Heart right ventricle (tissue), 16 donors: ENCODE measurements at regions of chr3 and their contacts with region 1.

Region 1: DNA sequence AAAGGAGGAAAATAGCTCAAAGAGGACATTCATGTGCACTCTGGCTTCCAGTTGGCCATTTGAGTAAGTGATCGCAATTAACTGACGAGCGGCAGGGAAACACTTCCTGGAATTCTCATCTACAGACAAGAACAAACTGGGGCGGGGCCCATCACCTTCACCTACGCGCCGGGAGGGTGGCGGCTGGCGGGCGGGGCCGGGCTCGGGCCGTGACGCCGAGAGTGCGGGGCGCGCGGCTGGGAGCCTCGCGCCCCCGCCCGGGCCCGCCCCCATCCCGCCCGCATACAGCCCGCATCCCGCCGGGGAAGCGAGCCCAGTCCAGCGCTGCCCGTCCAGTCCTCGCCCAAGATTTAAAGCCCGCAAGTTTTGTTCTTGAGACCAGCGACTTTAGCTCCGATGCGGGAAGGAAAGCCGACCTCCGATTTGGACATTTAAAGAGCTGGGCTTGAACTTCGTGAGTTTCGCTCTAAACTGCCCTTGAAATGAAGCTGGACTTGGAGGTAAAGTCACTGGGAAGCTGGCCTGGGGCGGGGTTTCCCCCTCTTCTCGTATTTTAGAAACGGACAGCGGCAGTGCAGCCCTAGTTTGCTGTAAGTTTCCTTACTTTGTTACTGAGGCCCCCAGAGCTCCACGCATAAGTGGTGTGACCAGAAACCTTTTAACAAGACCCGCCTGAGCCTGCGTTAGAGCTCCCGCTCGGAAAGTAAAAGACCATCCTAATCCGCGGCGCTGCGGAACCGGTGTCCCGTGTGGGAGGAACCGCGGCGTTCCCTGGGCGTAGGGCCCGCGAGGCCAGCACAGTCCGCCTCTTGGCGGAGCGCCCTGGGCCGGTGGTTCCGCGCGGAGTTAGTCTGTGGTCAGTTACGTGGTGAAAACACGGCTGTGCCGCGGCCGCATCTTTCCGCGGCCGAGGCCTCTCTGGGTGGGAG is at the start of gene B3GNT5:
- DNase-seq: peak; percentile 80 to 81
- ATAC-seq: peak; percentile 83 to 93 (median 90)
- H3K4me3 ChIP-seq: peak within 1 kb of the TSS; percentile 65 to 92 (median 80)
- H3K27ac ChIP-seq: peak within 1 kb of the TSS; percentile 83 to 97 (median 90)
- H3K4me1 ChIP-seq: peaks cover 0 to 22% (median 0%) of the 10 kb centered on the region in 9 donors
- H3K27me3 ChIP-seq: peaks cover 0 to 6% (median 0%) of the 10 kb centered on the region in 7 donors
- CTCF ChIP-seq: no peak
- total RNA-seq, gene B3GNT5: 2.0 to 9.0 (median 5.8) TPM

Region 2: DNA sequence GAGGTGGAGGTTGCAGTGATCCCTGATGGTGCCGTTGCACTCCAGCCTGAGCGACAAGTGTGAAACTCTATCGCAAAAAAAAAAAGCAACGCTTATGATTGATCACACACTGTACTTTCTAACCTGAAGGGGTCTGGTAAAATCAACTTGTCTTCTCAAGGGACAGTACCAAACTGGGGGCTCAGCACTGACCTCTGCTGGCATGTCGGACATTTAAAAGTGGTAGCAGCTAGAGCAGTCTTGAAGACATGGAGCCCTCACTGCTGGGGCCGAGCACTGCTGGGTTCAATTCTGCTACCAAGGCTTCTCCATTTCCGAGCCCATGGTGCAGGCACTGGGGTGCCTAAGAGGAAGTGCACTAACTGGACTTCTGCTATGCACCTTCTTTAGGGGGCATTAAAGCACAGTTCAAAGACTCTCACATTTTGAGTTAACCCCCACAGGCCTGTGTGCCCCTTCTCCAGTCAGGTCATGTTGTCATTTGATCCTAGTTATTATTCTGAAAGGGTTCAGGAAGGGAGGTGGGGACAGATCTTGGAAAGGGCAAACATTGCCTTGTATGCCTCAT is 64.3 kb before region 1 on chr3:
- intact Hi-C with region 1: loop called in 2 of 10 experiments (anchors 5 to 10 kb)
- DNase-seq: peak in 1 of 2 donors; percentile 44
- ATAC-seq: peak in 5 of 8 donors; percentile 27 to 59 (median 41)
- H3K4me3 ChIP-seq: no peak overlapping the region
- H3K27ac ChIP-seq: no peak overlapping the region
- H3K4me1 ChIP-seq: peaks cover 0 to 20% (median 0%) of the 10 kb centered on the region in 9 donors
- H3K27me3 ChIP-seq: peaks cover 0 to 4% (median 0%) of the 10 kb centered on the region in 7 donors
- CTCF ChIP-seq: peak in 7 of 9 donors; percentile 29 to 60 (median 43)

Region 3: DNA sequence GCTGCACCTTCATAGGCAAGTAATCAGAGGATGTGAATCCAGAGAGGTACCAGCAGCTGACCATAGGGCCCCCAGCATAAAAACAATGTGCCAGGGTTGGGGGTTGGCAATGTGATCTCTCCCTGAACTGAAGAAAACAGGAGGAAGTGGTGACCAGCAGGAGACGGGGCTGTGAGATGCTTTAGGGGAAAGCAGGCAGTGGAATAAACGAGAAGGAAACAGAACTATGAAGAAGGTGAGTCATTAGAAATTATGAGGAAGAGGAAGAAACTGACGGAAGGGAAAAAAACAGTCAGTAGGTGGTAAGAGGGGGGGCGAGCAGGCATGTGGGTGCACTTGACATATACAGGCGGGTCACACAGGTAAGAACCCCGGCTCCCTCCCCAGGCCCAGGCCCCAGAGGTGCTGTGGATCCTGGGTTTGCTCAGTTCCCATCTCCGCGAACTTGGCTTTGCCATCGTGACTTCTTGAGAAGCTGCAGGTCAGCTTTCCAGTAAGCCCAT is 42.3 kb before region 1 on chr3:
- intact Hi-C with region 1: loop called in 4 of 10 experiments (anchors 5 kb)
- DNase-seq: peak in 1 of 2 donors; percentile 19
- ATAC-seq: peak; percentile 25 to 59 (median 53)
- H3K4me3 ChIP-seq: peak overlapping the region in 2 of 10 donors; percentile 15 to 27
- H3K27ac ChIP-seq: peak overlapping the region in 9 of 10 donors; percentile 42 to 89 (median 71)
- H3K4me1 ChIP-seq: peaks cover 0 to 47% (median 21%) of the 10 kb centered on the region in 9 donors
- H3K27me3 ChIP-seq: no peaks in the 10 kb centered on the region
- CTCF ChIP-seq: no peak

Region 4: DNA sequence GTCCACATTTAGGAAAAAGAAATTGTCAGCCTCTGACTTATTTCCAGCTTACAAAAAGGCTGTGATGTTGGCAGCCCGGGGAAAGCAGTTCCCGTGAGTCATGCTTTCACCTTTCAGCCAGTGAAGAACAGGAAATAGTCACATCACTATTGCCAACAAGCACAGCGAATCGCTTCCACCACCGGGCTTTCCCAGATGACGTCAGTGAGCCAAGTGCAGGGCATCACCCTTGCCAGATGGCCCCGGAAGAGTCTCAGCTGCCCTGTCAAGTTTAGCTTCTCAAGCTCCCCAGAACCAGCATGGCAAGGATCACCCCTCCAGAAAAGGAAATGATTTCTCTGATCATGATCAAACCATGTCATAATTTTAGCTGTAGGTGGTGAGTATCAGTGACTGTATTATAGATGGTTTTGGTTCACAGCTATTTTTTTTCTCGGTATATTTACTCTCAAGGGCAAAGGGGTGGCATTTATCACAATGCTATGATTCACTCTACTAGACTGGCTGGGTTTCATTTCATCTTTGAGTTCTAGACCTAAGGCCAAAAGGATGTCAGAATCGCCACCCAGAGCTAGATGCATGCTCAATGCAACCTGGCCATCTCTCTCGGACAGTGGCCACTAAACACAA is 32.7 kb after region 1 on chr3:
- intact Hi-C with region 1: loop called in 1 of 10 experiments (anchors 5 kb)
- DNase-seq: peak; percentile 67 to 88
- ATAC-seq: peak; percentile 84 to 98 (median 94)
- H3K4me3 ChIP-seq: peak overlapping the region in 2 of 10 donors; percentile 2 to 9
- H3K27ac ChIP-seq: peak overlapping the region; percentile 42 to 83 (median 69)
- H3K4me1 ChIP-seq: peaks cover 0 to 33% (median 17%) of the 10 kb centered on the region in 9 donors
- H3K27me3 ChIP-seq: no peaks in the 10 kb centered on the region
- CTCF ChIP-seq: no peak

Region 5: GRCh38 chr3:183306798-183307671 is 53.8 kb after region 1 on chr3:
- intact Hi-C with region 1: loop called in 2 of 10 experiments (anchors 5 to 10 kb)
- DNase-seq: peak; percentile 62 to 78
- ATAC-seq: peak; percentile 75 to 94 (median 90)
- H3K4me3 ChIP-seq: no peak overlapping the region
- H3K27ac ChIP-seq: peak overlapping the region in 6 of 10 donors; percentile 36 to 82 (median 41)
- H3K4me1 ChIP-seq: peaks cover 0 to 50% (median 17%) of the 10 kb centered on the region in 9 donors
- H3K27me3 ChIP-seq: no peaks in the 10 kb centered on the region
- CTCF ChIP-seq: no peak

Region 6: GRCh38 chr3:183377307-183377959 is 124.2 kb after region 1 on chr3:
- intact Hi-C with region 1: loop called in 5 of 10 experiments (anchors 5 to 10 kb)
- DNase-seq: no peak
- ATAC-seq: no peak
- H3K4me3 ChIP-seq: no peak overlapping the region
- H3K27ac ChIP-seq: no peak overlapping the region
- H3K4me1 ChIP-seq: peaks cover 0 to 49% (median 0%) of the 10 kb centered on the region in 9 donors
- H3K27me3 ChIP-seq: peaks cover 0 to 6% (median 0%) of the 10 kb centered on the region in 7 donors
- CTCF ChIP-seq: no peak

Region 7: GRCh38 chr3:183385698-183386613 is 132.7 kb after region 1 on chr3:
- intact Hi-C with region 1: loop called in 4 of 10 experiments (anchors 5 to 10 kb)
- DNase-seq: peak in 1 of 2 donors; percentile 55
- ATAC-seq: peak; percentile 53 to 91 (median 79)
- H3K4me3 ChIP-seq: no peak overlapping the region
- H3K27ac ChIP-seq: no peak overlapping the region
- H3K4me1 ChIP-seq: peaks cover 0 to 19% (median 0%) of the 10 kb centered on the region in 9 donors
- H3K27me3 ChIP-seq: no peaks in the 10 kb centered on the region
- CTCF ChIP-seq: peak; percentile 39 to 79 (median 77)

Region 8: GRCh38 chr3:183701744-183702143 is 448.5 kb after region 1 on chr3:
- intact Hi-C with region 1: no loop called
- DNase-seq: no peak
- ATAC-seq: no peak
- H3K4me3 ChIP-seq: no peak overlapping the region
- H3K27ac ChIP-seq: no peak overlapping the region
- H3K4me1 ChIP-seq: peaks cover 0 to 42% (median 21%) of the 10 kb centered on the region in 9 donors
- H3K27me3 ChIP-seq: no peaks in the 10 kb centered on the region
- CTCF ChIP-seq: no peak